Ovary (tissue), 10 donors: ENCODE measurements at regions of chr10 and their contacts with region 1.

Region 1: GRCh38 chr10:6382081-6382480 is 179.3 kb downstream of the PFKFB3 start:
- DNase-seq: no peak
- H3K4me3 ChIP-seq: no peak overlapping the region
- H3K27ac ChIP-seq: no peak overlapping the region
- H3K4me1 ChIP-seq: peaks cover 6% of the 10 kb centered on the region
- H3K27me3 ChIP-seq: no peaks in the 10 kb centered on the region
- CTCF ChIP-seq: no peak
- EP300 ChIP-seq: no peak
- POLR2A ChIP-seq: no peak

Region 2: GRCh38 chr10:6221971-6222751 is 159.9 kb before region 1 on chr10:
- intact Hi-C with region 1: loop called in 1 of 4 experiments (anchors 10 kb)
- DNase-seq: no peak
- H3K4me3 ChIP-seq: no peak overlapping the region
- H3K27ac ChIP-seq: no peak overlapping the region
- H3K4me1 ChIP-seq: no peaks in the 10 kb centered on the region
- H3K27me3 ChIP-seq: no peaks in the 10 kb centered on the region
- CTCF ChIP-seq: no peak
- EP300 ChIP-seq: no peak
- POLR2A ChIP-seq: no peak

Region 3: DNA sequence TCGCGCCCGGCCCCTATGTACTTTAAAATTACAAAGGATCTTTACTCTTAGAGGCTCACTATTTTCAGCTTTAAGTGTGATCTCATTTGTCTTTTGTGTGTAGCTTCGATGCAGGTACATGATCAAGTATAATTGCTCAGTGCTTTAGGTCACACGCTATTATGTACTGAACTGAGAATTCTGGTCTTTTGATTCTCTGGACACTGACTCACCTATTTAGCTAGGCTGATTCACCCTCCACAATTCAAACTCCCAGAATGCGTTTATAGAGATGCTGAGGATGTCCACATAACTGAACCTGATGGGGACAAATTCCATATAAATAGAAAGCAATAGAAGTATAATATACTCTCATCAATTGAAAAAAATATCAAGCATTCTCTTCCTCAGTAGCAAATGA is 140.1 kb after region 1 on chr10:
- intact Hi-C with region 1: no loop called
- DNase-seq: no peak
- H3K4me3 ChIP-seq: no peak overlapping the region
- H3K27ac ChIP-seq: no peak overlapping the region
- H3K4me1 ChIP-seq: no peaks in the 10 kb centered on the region
- H3K27me3 ChIP-seq: no peaks in the 10 kb centered on the region
- CTCF ChIP-seq: no peak
- EP300 ChIP-seq: no peak
- POLR2A ChIP-seq: no peak

Region 4: DNA sequence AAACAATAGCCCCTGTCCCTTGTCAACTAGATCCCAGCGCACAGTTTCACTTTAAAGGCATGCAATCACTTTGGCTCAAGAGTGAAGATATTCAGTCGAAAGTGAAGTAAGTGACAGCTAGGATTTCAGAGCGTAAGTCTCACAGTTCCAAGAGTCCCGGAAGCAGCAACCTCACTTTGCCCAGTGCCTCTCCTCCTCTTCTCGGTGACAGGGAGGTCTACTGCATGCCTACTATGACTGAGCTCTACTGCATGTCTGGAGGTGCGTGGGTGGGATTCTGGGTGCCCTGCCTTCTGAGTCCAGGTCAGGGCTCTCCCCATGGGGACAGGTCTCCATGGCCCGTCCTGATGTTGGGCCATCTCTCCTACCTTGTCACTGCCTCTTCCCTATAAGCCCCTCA is 181.0 kb after region 1 on chr10:
- intact Hi-C with region 1: no loop called
- DNase-seq: no peak
- H3K4me3 ChIP-seq: no peak overlapping the region
- H3K27ac ChIP-seq: no peak overlapping the region
- H3K4me1 ChIP-seq: no peaks in the 10 kb centered on the region
- H3K27me3 ChIP-seq: no peaks in the 10 kb centered on the region
- CTCF ChIP-seq: no peak
- EP300 ChIP-seq: no peak
- POLR2A ChIP-seq: no peak